Mammary epithelial cell (primary cell): ENCODE measurements at regions of chr12 and their contacts with region 1.

Region 1: GRCh38 chr12:51056244-51056643 is 8.1 kb downstream of the LETMD1 start:
- DNase-seq: peak; percentile 91
- H3K4me3 ChIP-seq: no peak overlapping the region
- H3K27ac ChIP-seq: no peak overlapping the region
- H3K4me1 ChIP-seq: peaks cover 8% of the 10 kb centered on the region
- H3K27me3 ChIP-seq: no peaks in the 10 kb centered on the region
- CTCF ChIP-seq: no peak

Region 2: DNA sequence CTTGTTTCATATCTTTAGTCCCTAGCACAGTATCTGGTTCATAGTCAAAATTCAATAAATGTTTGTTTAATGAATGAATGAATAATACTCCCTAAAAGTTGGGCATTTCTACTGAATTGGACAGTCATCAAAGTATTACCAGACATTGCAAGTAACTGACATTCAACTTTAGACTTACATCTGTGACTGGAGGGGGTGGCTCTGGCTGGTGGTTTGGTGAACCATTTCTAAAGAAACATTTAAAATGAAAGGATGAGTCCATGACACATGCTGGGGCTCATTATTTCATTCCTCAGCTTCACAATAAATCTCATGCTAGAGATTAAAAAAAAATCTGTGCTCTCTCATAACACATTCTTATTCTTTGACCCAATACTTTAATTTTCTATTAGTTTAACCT is 47.7 kb after region 1 on chr12:
- CTCF ChIA-PET with region 1: no interaction called
- dilution Hi-C with region 1: no loop called
- in situ Hi-C with region 1: no loop called
- intact Hi-C with region 1: loop called (anchors 2 kb)
- DNase-seq: no peak
- H3K4me3 ChIP-seq: no peak overlapping the region
- H3K27ac ChIP-seq: no peak overlapping the region
- H3K4me1 ChIP-seq: no peaks in the 10 kb centered on the region
- H3K27me3 ChIP-seq: no peaks in the 10 kb centered on the region
- CTCF ChIP-seq: no peak